ENCODE measurements at regions of chr1 and their contacts with region 1.

Region 1: DNA sequence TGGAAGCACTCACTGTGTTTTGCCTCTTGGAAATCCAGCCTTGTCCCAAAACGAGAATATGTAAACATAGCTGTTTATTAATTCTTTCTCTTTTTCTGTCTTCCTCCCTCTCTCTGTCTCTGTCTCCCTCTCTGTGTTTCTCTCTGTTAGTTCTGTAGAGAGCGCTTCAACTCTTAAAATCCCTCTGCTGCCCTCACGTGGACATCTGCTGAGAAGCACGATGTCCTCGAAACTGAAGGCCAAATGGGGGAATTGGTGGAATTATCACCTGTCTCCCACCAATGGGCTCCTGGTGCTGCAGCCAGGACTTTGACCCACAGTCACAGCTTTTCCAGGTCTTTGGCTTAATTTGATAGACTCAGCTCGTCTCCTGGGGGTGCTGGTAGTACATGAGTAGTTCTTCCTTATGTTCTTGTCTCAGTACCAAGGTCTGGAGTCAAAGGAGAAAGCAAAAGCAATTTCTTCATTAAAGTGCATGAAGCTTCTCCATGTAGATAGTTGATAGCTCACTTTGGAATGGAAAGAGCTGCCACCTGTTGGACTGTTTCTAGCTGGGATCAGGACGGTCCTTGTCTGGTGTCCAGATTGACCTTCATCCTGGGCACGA is 5.5 kb upstream of the GBP6 start:
- DNase-seq: peak; percentile 92
- ATAC-seq: peak; percentile 85
- H3K4me3 Mint-ChIP-seq: peak overlapping the region; percentile 20
- H3K27ac Mint-ChIP-seq: peak overlapping the region; percentile 82
- H3K4me1 Mint-ChIP-seq: peaks cover 61% of the 10 kb centered on the region
- H3K27me3 Mint-ChIP-seq: no peaks in the 10 kb centered on the region

Region 2: GRCh38 chr1:88998716-88999115 is 359.7 kb before region 1 on chr1:
- CTCF ChIA-PET with region 1: interaction called, 13 read pairs
- DNase-seq: peak; percentile 50
- ATAC-seq: peak; percentile 94
- H3K4me3 Mint-ChIP-seq: no peak overlapping the region
- H3K27ac Mint-ChIP-seq: no peak overlapping the region
- H3K4me1 Mint-ChIP-seq: peaks cover 29% of the 10 kb centered on the region
- H3K27me3 Mint-ChIP-seq: no peaks in the 10 kb centered on the region

Region 3: DNA sequence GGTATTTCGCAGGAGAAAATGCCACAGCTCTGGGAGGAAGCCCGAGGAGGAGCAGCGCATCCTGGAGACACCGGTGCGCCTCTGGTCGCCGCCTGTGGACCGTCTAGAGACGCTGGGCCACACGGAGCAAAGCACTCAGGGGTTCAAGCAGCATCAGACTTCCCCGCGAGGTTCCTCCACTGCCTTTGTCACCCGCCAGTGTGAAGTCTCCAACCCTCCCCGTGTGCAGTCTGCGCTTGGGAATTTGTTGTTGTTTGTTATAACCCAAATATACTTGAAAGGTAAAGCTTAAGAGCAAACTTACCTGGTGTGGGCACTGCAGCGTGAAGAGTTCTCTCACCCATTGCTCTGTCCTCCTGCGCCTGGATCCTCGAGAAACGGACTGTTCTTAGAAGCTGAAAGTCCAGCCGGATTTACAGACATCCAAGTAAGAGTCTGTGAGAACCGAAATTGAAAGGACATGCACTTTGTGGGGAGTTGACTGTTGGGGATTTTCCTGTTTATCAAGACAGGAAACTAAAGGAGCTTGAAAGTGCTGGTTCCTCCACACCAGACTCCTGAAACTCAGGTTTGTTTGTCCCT is 159.8 kb before region 1 on chr1 and contains the start of gene GBP4:
- CTCF ChIA-PET with region 1: interaction called, 22 read pairs
- DNase-seq: peak; percentile 67
- ATAC-seq: peak; percentile 76
- H3K4me3 Mint-ChIP-seq: peak within 1 kb of the TSS; percentile 97
- H3K27ac Mint-ChIP-seq: peak within 1 kb of the TSS; percentile 99
- H3K4me1 Mint-ChIP-seq: peaks cover 58% of the 10 kb centered on the region
- H3K27me3 Mint-ChIP-seq: no peaks in the 10 kb centered on the region
- total RNA-seq, gene GBP4: 69.7 to 78.6 TPM

Region 4: GRCh38 chr1:89274411-89274857 is 84.0 kb before region 1 on chr1:
- CTCF ChIA-PET with region 1: interaction called, 97 read pairs
- DNase-seq: no peak
- ATAC-seq: peak; percentile 21
- H3K4me3 Mint-ChIP-seq: peak overlapping the region; percentile 72
- H3K27ac Mint-ChIP-seq: peak overlapping the region; percentile 95
- H3K4me1 Mint-ChIP-seq: peaks cover 62% of the 10 kb centered on the region
- H3K27me3 Mint-ChIP-seq: no peaks in the 10 kb centered on the region

Region 5: DNA sequence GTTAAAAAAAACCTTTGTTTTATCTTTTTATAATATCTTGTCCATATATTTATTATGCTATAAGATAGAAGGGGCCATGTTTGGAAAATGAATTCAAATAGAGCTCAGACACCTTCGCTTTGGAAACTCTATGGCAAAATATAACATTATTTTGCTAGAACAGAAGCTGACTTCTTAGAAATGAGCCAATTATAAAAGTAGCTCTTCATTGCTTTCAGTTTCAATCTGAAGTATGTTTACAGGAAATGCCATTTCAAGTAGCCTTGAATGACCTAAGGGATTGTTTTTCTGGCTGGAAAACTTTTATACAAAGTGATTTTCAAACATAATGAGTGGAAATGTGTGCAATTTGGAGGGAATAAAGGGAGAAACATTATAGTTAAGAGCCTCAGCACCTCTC is 47.9 kb before region 1 on chr1:
- CTCF ChIA-PET with region 1: interaction called, 24 read pairs
- DNase-seq: no peak
- ATAC-seq: peak; percentile 88
- H3K4me3 Mint-ChIP-seq: peak overlapping the region; percentile 42
- H3K27ac Mint-ChIP-seq: peak overlapping the region; percentile 99
- H3K4me1 Mint-ChIP-seq: peaks cover 43% of the 10 kb centered on the region
- H3K27me3 Mint-ChIP-seq: no peaks in the 10 kb centered on the region

Region 6: GRCh38 chr1:89339039-89339438 is 19.4 kb before region 1 on chr1:
- CTCF ChIA-PET with region 1: no interaction called
- DNase-seq: no peak
- ATAC-seq: no peak
- H3K4me3 Mint-ChIP-seq: no peak overlapping the region
- H3K27ac Mint-ChIP-seq: no peak overlapping the region
- H3K4me1 Mint-ChIP-seq: no peaks in the 10 kb centered on the region
- H3K27me3 Mint-ChIP-seq: no peaks in the 10 kb centered on the region

Region 7: GRCh38 chr1:89444791-89445190 is 86.4 kb after region 1 on chr1:
- CTCF ChIA-PET with region 1: no interaction called
- DNase-seq: no peak
- ATAC-seq: no peak
- H3K4me3 Mint-ChIP-seq: no peak overlapping the region
- H3K27ac Mint-ChIP-seq: no peak overlapping the region
- H3K4me1 Mint-ChIP-seq: no peaks in the 10 kb centered on the region
- H3K27me3 Mint-ChIP-seq: peaks cover 12% of the 10 kb centered on the region

Region 8: GRCh38 chr1:89519779-89520358 is 161.5 kb after region 1 on chr1:
- CTCF ChIA-PET with region 1: no interaction called
- DNase-seq: peak; percentile 68
- ATAC-seq: peak; percentile 24
- H3K4me3 Mint-ChIP-seq: no peak overlapping the region
- H3K27ac Mint-ChIP-seq: no peak overlapping the region
- H3K4me1 Mint-ChIP-seq: peaks cover 23% of the 10 kb centered on the region
- H3K27me3 Mint-ChIP-seq: no peaks in the 10 kb centered on the region

Region 9: DNA sequence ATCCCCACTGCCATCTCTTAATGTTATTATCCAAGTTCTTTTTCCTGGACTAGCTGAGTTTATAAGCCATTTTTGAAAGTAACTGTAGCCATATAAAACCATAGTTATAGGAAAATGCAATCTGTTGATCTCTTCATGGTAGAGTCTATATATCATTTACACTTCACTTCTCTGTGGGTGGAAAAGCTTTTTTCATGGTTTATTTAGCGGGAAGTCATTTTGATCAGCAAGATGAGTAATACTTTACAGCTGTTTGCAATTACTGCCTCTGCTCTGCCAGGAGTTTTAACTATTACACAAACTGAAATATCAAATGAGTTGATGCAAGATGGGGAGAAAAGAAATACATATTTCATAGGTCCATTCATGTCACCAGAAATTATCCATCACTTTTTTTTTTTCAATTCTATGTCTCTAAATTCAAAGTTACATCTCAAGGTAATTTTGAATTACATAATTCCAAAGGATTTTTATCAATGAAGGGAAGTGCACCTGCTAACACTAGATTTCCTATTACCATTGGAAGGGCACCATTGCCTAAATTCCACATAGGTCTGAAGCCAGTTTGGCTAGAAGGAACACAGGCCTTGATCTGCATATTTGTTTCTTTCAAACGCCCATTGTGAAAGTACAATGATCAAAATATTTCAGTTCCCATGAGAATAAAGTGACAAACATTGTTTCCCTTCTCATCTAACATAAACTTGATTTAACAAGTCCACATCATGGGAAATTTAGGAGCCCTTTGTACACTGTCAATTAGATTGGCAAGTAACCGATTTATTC is 933.2 kb after region 1 on chr1:
- CTCF ChIA-PET with region 1: no interaction called
- DNase-seq: no peak
- ATAC-seq: no peak
- H3K4me3 Mint-ChIP-seq: no peak overlapping the region
- H3K27ac Mint-ChIP-seq: no peak overlapping the region
- H3K4me1 Mint-ChIP-seq: no peaks in the 10 kb centered on the region
- H3K27me3 Mint-ChIP-seq: no peaks in the 10 kb centered on the region